ENCODE measurements at regions of chr19 and their contacts with region 1.

Region 1: DNA sequence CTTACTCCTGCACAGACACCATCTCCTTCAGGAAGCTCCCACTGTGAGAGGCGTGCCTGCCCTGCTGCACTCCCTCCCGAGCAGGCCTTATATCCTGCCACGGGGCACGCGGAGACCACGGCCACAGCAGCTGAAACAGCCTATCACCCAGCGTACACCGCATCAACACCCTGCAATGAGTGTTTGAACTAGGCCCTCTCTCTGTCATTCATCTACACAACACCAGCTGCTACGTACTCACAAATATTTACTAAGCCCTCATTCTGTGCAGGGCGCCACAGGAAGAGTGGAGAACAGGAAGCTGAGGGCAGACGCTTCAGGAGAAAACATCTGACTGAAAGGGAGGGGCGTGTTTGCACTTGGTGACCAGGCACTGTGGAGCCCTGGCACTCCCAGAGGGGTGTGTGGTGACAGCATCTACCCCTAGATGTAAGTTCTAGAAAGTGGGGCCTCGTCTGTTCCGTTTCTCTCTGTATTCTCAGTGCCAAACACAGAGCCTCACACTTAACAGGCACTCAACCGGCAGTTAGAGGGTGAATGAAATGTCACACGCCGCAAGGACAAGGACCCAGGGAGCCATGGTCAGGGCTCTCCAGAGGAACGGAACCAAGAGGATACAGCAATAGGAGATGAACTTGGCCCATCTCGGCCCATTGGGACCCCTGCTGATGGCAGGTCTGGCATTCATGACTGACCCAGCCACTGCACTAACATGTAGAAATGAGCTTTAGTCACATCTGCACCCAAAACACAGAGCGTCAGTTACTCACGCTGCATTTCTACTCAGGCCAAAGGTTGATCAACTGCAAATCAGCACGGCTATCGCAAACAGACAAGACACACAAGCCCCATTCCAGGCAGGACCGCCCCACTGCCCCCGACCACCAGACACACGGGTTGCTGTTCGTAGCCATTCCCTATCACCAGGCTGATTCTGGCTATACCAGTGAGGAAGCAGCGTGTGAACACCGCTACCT is 15.7 kb downstream of the RANBP3 start:
- DNase-seq: peak; percentile 84 to 93 (median 88)
- H3K4me3 ChIP-seq: peak overlapping the region; percentile 11 to 42
- H3K4me3 Mint-ChIP-seq: peak overlapping the region; percentile 60 to 97 (median 82)
- H3K27ac ChIP-seq: peak overlapping the region; percentile 78
- H3K27ac Mint-ChIP-seq: peak overlapping the region; percentile 89 to 100 (median 99)
- H3K4me1 ChIP-seq: peaks cover 95% of the 10 kb centered on the region
- H3K4me1 Mint-ChIP-seq: peaks cover 53 to 99% (median 82%) of the 10 kb centered on the region in 4 donors
- H3K27me3 ChIP-seq: no peaks in the 10 kb centered on the region
- H3K27me3 Mint-ChIP-seq: no peaks in the 10 kb centered on the region

Region 2: DNA sequence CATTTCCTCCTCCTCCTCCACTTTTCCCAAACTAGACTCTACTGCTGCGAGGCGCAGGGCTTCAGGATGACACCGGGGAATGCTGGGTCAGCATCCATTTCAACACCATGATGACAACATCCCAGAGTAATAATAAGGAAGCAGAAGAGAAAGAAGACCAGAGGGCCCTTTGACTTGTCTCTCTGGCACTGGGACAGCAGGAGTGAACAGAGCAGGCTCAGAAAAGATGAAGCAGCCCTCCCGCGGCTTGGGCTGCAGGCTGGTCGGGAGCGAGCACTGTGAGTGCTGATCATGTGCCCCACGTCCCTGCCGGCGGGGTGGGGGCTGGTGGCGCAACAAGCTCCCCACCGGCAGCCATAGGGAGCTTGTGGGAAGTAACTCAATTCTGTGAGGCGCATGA is 14.8 kb before region 1 on chr19:
- CTCF ChIA-PET with region 1: interaction called, 60 read pairs
- POLR2A ChIA-PET with region 1: interaction called, 104 read pairs
- intact Hi-C with region 1: loop called (anchors 1 kb)
- DNase-seq: no peak
- H3K4me3 ChIP-seq: no peak overlapping the region
- H3K4me3 Mint-ChIP-seq: peak overlapping the region in 3 of 8 donors; percentile 38 to 61 (median 40)
- H3K27ac ChIP-seq: no peak overlapping the region
- H3K27ac Mint-ChIP-seq: peak overlapping the region in 6 of 7 donors; percentile 36 to 94 (median 82)
- H3K4me1 ChIP-seq: peaks cover 63% of the 10 kb centered on the region
- H3K4me1 Mint-ChIP-seq: peaks cover 50 to 76% (median 65%) of the 10 kb centered on the region in 4 donors
- H3K27me3 ChIP-seq: no peaks in the 10 kb centered on the region
- H3K27me3 Mint-ChIP-seq: no peaks in the 10 kb centered on the region

Measured in CD4-positive, alpha-beta memory T cell (primary cell).